ENCODE measurements at regions of chr4 and their contacts with region 1.

Region 1: DNA sequence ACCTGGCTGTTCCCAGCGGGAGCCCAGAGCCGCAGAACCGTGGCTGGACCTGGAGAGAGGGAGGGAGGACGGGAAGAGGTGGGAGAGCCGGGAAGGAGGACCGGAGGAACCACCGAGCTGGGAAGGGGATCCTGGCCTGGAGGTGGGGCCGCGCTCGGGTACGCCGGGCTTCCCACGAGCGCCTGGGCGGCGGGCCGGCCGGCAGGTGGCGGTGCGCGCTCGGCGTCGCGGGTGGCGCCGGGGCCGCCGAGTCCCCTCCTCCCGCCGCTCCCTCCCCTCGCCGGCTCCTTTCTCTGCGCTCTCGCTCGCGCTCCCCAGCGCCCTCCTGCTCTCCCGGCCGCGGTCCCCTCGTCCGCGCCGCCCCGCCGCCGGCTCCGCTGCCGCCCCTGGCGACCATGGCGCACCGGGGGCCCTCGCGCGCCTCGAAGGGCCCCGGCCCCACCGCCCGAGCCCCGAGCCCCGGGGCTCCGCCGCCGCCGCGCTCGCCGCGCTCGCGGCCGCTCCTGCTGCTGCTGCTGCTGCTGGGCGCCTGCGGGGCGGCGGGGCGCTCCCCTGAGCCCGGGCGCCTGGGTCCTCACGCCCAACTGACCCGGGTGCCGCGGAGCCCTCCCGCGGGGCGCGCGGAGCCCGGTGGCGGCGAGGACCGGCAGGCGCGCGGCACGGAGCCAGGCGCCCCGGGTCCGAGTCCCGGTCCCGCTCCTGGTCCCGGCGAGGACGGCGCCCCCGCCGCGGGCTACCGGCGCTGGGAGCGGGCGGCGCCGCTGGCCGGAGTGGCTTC is at the start of gene SORCS2:
- DNase-seq: peak; percentile 60 to 81 (median 71)
- ATAC-seq: peak; percentile 44 to 90 (median 74)
- H3K4me3 ChIP-seq: peak within 1 kb of the TSS; percentile 19 to 56 (median 44)
- H3K27ac ChIP-seq: no peak within 1 kb of the TSS
- H3K4me1 ChIP-seq: peaks cover 0 to 21% (median 12%) of the 10 kb centered on the region in 12 donors
- H3K27me3 ChIP-seq: peaks cover 10 to 63% (median 36%) of the 10 kb centered on the region in 9 donors
- CTCF ChIP-seq: peak; percentile 10 to 88 (median 68)
- POLR2A ChIP-seq: no peak
- total RNA-seq, gene SORCS2: 1.7 to 5.5 (median 3.2) TPM

Region 2: DNA sequence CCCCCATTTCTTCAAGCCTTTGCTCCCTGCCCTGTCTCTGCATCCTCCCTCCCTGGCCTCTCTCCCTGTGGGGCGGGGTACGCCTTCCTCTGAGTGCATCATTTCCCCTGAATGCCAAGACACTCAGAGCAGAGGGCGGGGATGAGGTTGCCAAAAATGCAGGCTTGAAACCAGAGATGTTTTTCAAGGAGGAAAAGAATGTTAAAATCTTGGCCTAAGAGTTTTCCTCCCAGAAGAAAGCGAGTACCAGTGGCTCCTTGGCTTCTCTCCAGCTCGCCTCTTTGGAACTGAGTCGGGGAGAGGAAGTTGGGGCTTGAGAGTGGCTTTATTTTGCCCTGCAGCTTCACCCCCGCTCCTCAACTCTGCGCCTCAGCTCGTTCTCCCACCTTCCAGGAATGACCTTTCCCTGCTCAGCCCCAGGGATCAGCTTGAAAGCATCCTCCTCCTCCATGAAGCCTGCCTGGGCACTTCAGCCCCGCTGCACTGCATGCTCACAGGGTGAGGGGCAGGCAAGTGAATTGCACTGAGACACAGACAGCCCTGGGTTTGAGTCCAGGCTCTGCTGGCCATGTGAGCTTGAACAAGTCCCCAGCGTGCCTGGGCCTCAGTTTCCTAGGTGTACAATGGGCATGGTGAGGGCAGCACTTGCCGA is 57.6 kb before region 1 on chr4:
- intact Hi-C with region 1: no loop called
- DNase-seq: peak; percentile 45 to 65 (median 50)
- ATAC-seq: peak in 3 of 4 donors; percentile 56 to 72 (median 67)
- H3K4me3 ChIP-seq: no peak overlapping the region
- H3K27ac ChIP-seq: peak overlapping the region in 7 of 12 donors; percentile 5 to 59 (median 37)
- H3K4me1 ChIP-seq: peaks cover 0 to 15% (median 7%) of the 10 kb centered on the region in 12 donors
- H3K27me3 ChIP-seq: no peaks in the 10 kb centered on the region
- CTCF ChIP-seq: no peak
- POLR2A ChIP-seq: no peak

Region 3: DNA sequence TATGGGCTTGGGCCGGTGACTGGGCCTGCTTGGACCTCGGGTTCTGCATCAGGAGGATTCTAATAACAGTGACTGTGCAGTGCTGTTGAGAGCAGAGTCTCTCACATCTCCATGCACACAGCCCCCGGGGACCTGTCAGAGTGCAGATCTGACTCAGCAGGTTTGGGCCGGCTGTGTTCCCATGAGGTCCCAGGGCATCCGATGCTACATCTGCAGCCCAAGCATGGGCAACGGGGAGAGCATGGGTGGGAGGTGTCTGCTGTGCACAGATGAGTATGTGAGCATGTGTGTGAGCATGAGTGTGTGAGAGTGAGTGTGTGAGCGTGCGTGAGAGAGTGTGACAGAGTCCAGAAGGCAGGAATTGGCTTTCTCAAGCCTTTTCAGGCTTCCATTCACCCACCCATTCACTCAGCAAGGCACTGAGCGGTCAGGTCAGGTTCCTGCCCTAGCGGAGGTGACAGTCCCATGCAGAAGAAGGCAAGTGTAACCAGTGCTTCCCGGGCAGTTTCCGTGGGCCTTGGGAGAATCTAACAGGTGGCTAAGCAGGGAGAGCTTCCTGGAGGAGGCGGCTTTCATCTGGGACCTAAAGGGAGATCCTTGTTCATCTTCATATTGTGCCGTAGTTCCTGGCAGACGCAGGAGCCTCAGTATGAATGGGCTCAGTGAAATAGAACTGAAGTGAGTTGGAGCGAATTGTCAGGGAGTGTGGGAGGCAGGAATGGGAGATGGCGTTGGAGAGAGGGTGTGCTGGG is 62.5 kb after region 1 on chr4:
- intact Hi-C with region 1: loop called in 1 of 10 experiments (anchors 2 kb)
- DNase-seq: peak in 3 of 5 donors; percentile 53 to 73 (median 73)
- ATAC-seq: peak in 1 of 4 donors; percentile 8
- H3K4me3 ChIP-seq: no peak overlapping the region
- H3K27ac ChIP-seq: no peak overlapping the region
- H3K4me1 ChIP-seq: peaks cover 0 to 41% (median 12%) of the 10 kb centered on the region in 12 donors
- H3K27me3 ChIP-seq: no peaks in the 10 kb centered on the region
- CTCF ChIP-seq: no peak
- POLR2A ChIP-seq: no peak

Region 4: GRCh38 chr4:7335344-7336069 is 143.1 kb after region 1 on chr4:
- intact Hi-C with region 1: loop called in 4 of 10 experiments (anchors 2 to 10 kb)
- DNase-seq: peak; percentile 46 to 76 (median 58)
- ATAC-seq: peak in 3 of 4 donors; percentile 52 to 63 (median 60)
- H3K4me3 ChIP-seq: no peak overlapping the region
- H3K27ac ChIP-seq: no peak overlapping the region
- H3K4me1 ChIP-seq: peaks cover 0 to 16% (median 0%) of the 10 kb centered on the region in 12 donors
- H3K27me3 ChIP-seq: no peaks in the 10 kb centered on the region
- CTCF ChIP-seq: peak; percentile 46 to 75 (median 58)
- POLR2A ChIP-seq: no peak

Region 5: DNA sequence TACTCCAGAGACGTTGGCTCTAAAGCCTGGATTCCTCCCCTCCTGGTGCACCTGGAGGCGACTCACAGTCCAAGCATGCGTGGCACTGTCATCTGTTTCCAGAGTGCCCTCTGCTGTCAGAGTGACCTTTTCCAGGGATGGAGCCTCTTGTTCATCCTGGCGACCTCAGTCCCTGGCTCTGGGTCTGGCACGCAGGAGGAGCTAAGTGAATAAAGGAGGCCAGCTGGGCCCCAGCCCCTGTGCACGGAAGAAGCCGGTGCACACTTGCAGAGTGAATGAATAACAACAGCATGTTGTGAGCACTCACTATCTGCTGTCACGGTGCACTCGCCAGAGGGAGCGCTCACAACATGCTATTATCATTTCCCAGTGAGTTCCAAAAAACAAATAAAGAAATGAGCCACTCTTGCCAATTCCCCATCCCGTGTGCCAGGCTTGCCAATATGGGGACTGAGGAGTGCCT is 270.1 kb after region 1 on chr4:
- intact Hi-C with region 1: loop called in 2 of 10 experiments (anchors 5 to 10 kb)
- DNase-seq: peak in 3 of 5 donors; percentile 31 to 62 (median 45)
- ATAC-seq: peak; percentile 47 to 80 (median 69)
- H3K4me3 ChIP-seq: no peak overlapping the region
- H3K27ac ChIP-seq: peak overlapping the region in 1 of 12 donors; percentile 8
- H3K4me1 ChIP-seq: peaks cover 0 to 11% (median 0%) of the 10 kb centered on the region in 12 donors
- H3K27me3 ChIP-seq: peaks cover 0 to 12% (median 0%) of the 10 kb centered on the region in 9 donors
- CTCF ChIP-seq: peak in 10 of 12 donors; percentile 7 to 58 (median 42)
- POLR2A ChIP-seq: no peak

Region 6: DNA sequence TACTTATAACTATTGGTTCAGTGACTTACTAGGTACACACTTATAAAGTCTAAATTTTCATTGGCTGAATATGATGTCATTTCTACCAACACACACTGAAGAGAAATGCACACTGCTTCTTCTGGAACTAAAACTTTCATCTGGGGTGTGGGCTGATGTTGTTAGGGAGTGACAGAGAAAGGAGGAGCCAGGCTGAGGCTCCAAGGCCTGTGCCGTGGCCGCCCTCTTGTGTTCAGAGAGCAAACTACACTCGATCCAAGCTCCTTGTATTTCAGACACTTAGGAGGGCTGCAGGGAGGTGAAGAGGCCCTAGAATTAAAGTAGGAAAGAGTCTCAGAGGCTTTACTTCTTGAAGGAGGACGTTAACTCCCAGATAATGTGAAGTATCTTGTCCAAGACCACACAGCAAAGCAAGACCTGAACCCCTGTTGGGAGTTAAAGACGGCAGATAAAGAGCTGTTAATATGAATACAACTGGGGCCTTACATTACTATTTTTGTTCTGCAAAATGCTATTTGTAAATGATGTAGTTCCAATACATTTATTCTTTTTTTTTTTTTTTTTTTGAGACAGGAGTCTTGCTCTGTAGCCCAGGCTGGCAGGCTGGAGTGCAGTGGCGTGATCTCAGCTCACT is 609.8 kb after region 1 on chr4:
- intact Hi-C with region 1: loop called in 1 of 10 experiments (anchors 2 kb)
- DNase-seq: peak in 4 of 5 donors; percentile 72 to 82 (median 80)
- ATAC-seq: peak; percentile 39 to 68 (median 50)
- H3K4me3 ChIP-seq: no peak overlapping the region
- H3K27ac ChIP-seq: no peak overlapping the region
- H3K4me1 ChIP-seq: peaks cover 0 to 42% (median 29%) of the 10 kb centered on the region in 12 donors
- H3K27me3 ChIP-seq: no peaks in the 10 kb centered on the region
- CTCF ChIP-seq: peak; percentile 87 to 96 (median 94)
- POLR2A ChIP-seq: no peak

Measured in heart left ventricle (tissue), 16 donors.